ENCODE measurements at regions of chr19 and their contacts with region 1.

Region 1: GRCh38 chr19:42121656-42122069 is 10.6 kb downstream of the POU2F2 start:
- DNase-seq: peak; percentile 97
- H3K4me3 Mint-ChIP-seq: peak overlapping the region; percentile 76
- H3K27ac Mint-ChIP-seq: peak overlapping the region; percentile 98
- H3K4me1 Mint-ChIP-seq: peaks cover 54% of the 10 kb centered on the region
- H3K27me3 Mint-ChIP-seq: no peaks in the 10 kb centered on the region

Region 2: GRCh38 chr19:42075616-42076379 is 45.9 kb before region 1 on chr19 and contains the start of gene ZNF574:
- CTCF ChIA-PET with region 1: interaction called, 4 read pairs
- intact Hi-C with region 1: loop called (anchors 2 kb)
- DNase-seq: peak; percentile 99
- H3K4me3 Mint-ChIP-seq: peak within 1 kb of the TSS; percentile 97
- H3K27ac Mint-ChIP-seq: peak within 1 kb of the TSS; percentile 96
- H3K4me1 Mint-ChIP-seq: peaks cover 22% of the 10 kb centered on the region
- H3K27me3 Mint-ChIP-seq: no peaks in the 10 kb centered on the region
- total RNA-seq, gene ZNF574: 8.4 to 8.8 TPM

Region 3: DNA sequence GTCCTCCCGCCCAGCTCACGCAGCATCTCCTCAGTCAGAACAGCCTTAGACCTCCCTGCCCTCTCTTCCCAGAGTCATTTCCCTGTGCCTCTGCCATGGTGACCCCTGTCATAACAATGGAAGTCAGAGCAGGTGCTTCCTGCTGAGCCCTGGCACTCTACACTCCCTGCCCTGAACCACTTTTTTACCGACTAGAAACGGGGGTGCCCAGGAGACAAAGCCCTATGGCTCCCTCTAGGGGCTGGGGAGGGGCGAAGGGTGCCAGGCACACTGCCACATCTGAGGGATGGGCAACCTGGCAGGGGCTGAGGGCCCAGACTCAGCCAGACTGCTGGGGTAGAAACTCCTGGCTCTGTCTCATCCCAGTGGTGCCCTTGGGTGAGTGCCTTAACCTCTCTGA is 29.3 kb before region 1 on chr19:
- CTCF ChIA-PET with region 1: no interaction called
- intact Hi-C with region 1: no loop called
- DNase-seq: peak; percentile 58
- H3K4me3 Mint-ChIP-seq: no peak overlapping the region
- H3K27ac Mint-ChIP-seq: no peak overlapping the region
- H3K4me1 Mint-ChIP-seq: peaks cover 20% of the 10 kb centered on the region
- H3K27me3 Mint-ChIP-seq: no peaks in the 10 kb centered on the region

Region 4: GRCh38 chr19:42158926-42159325 is 37.3 kb after region 1 on chr19:
- CTCF ChIA-PET with region 1: no interaction called
- intact Hi-C with region 1: no loop called
- DNase-seq: no peak
- H3K4me3 Mint-ChIP-seq: no peak overlapping the region
- H3K27ac Mint-ChIP-seq: no peak overlapping the region
- H3K4me1 Mint-ChIP-seq: peaks cover 12% of the 10 kb centered on the region
- H3K27me3 Mint-ChIP-seq: no peaks in the 10 kb centered on the region

Region 5: DNA sequence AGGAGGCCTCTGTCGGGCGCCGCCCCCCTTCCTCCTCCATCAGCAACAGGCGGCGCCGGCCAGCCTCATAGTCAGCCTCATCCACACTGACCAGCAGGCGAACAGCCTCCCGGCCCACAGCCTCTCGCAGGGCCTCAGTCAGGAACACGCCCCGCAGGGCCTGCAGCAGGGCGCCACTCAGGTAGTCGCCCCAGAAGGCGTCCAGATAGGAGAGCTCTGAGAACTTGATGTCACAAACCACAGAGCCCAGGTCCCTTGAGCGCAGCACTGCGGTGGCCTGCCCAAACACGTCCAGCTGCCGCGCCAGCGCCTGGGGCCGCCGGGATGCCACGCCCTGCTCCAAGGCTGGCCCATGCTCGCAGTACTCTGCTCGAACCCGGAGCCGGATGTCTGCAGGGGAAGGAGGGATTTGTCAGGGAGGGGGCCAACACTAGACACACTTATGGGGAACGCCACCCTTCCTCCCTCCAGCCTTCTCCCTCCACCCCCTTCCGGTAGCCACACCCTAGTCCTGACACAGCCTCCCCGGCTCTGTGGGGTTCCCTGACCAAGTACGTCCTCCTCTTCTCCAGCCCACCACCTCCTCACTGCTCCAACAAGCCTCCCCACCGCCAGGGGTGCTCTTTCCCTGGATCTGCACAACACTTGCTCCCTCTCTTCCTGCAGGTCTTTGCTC is 77.9 kb after region 1 on chr19:
- CTCF ChIA-PET with region 1: no interaction called
- intact Hi-C with region 1: loop called (anchors 1 kb)
- DNase-seq: peak; percentile 88
- H3K4me3 Mint-ChIP-seq: peak overlapping the region; percentile 58
- H3K27ac Mint-ChIP-seq: peak overlapping the region; percentile 96
- H3K4me1 Mint-ChIP-seq: peaks cover 79% of the 10 kb centered on the region
- H3K27me3 Mint-ChIP-seq: no peaks in the 10 kb centered on the region

Region 6: DNA sequence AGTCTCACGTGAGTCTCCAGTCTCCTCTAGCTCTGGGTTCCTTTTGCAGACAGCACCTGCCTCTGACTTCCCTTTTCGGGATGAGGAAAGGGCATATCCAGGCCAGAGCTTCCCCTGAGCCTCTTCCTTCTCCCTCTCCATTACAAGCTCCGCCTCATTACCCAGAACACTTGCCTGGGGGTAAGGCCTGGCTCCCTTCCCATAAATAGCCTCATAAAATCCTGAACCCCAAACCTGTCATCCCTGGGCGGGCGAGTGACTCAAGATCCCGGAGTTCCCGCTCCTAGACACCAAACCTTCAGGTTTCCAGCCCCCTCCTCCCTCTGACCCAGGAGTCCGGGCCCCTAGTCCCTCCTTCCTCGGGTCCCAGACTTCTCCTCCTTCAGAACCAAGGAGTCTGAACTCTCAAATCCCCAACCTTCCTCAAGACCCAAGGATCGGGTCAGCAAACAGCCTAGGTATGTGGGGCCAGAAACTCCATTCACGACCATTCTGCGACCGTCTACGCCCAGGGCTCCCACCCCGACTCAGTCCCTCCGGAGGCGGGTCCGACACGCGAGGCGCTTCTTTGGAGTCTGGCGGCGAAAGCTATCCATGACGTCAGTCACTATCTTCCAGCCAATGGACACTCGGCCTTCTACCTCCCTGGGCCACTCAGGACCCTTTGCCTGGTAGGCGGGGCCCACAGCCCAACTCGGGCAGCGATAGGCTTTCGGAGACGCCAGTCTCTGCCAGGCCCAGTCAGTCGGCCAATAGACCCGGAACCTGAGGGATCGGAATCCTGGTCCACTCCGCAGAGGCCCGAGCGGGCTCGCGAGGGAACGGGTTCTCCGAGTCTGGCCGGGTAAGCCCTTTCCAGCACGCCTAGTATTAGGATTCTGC is 275.0 kb after region 1 on chr19:
- CTCF ChIA-PET with region 1: no interaction called
- intact Hi-C with region 1: loop called (anchors 1 kb)
- DNase-seq: peak; percentile 98
- H3K4me3 Mint-ChIP-seq: peak overlapping the region; percentile 89
- H3K27ac Mint-ChIP-seq: peak overlapping the region; percentile 88
- H3K4me1 Mint-ChIP-seq: peaks cover 32% of the 10 kb centered on the region
- H3K27me3 Mint-ChIP-seq: no peaks in the 10 kb centered on the region